Left colon (tissue), 2 donors: ENCODE measurements at regions of chr1 and their contacts with region 1.

Region 1: DNA sequence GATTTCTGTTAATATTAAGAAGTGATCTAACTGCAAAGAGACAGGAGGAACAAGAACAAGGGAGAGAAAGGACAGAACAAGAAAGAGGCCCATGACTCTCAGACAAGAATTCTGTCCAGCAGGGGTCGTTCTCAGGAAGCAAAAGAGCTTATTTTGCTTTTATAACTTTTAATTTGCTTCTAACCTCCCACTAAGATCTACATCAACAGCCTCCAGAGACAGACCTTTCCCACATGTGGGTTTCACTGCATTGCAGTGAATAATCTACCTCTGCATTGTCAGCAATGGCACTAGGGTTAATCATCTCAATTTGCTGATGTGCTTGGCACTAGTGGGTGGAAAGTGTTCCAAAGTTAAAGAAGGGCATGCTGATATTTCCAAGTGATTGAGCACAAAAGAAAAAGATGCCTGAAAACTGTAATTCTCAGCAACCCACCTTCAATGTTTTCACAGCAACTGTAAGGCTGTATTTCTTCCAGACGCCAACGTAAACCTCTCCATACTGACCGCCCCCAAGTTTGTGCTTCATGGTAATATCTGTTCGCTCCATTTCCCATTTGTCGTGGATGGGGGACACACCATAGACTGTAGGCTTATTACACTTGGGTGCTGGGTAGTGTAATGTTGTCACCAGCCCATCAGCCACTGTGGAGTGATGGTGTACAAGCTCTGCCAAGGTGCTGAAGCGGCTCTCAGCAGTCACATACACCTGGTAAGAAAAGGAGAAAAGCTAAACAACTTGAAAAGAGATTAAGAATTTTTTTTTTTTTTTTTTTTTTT is 39.5 kb downstream of the TOR3A start:
- DNase-seq: peak in 1 of 2 donors; percentile 54
- ATAC-seq: peak; percentile 72

Region 2: GRCh38 chr1:178931858-178932551 is 189.3 kb before region 1 on chr1:
- intact Hi-C with region 1: no loop called
- DNase-seq: peak; percentile 31 to 76
- ATAC-seq: peak; percentile 31

Region 3: DNA sequence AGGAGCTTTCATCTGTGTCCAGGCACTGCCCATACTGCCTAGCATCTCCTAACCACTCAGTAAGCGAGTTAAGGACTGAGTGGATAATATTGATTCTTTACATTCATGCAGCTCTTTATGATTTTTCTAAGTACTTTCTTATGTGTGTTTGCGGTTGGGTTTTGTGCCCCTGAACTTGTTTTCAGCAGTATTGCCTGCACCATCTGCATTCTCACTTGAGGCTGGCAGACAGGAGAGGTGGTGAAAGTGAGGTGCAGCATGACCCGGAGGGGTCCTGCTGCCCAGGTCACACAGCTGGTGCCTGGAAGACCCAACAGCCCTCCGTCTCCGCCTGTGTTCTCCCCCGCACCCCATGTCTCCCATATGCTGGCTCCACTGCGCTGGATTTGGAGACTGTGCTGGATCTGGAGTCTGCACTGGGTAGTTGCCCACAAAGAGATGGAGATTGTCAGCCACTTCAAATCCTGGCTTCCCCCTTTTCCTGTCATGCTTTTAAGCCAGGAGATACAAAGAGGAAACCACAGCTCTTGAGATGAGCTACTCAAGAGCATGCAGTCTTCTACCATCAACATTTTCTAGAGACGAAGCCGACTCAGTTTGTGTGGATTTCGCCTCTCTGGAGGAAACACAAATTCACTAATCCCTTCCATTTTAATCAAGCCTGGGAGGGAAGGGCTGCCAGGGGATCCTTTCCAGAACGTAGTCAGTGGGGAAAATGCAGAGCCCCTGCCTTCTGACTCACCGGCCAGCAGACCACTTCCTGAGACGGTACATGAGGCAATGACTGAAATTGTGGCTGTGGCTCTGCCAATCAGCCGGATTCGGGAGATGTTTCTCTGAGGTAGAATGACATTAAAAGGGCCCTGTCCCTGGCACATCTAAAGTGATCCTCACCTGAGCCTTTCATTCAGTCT is 178.8 kb before region 1 on chr1:
- intact Hi-C with region 1: no loop called
- DNase-seq: no peak
- ATAC-seq: no peak

Region 4: DNA sequence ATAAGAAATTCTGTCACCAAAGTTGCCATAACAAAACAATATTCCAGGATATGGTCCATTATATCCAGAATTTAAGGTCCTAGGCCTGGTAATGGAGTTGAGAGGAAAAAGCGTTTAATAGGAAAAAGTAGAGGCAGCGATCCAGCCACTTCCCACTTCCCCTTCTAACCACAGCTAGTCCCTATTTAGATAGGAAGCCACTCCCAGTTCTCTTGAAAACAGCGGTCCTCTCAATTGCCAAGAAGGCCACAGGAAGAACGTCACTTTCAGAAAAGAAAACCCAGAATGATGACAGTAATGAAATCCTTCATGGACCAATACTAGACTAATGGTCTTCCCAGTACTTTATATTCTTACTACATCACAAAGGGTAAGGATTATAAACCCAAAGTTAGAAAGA is 69.5 kb after region 1 on chr1:
- intact Hi-C with region 1: loop called in 1 of 2 experiments (anchors 10 kb)
- DNase-seq: no peak
- ATAC-seq: no peak

Region 5: DNA sequence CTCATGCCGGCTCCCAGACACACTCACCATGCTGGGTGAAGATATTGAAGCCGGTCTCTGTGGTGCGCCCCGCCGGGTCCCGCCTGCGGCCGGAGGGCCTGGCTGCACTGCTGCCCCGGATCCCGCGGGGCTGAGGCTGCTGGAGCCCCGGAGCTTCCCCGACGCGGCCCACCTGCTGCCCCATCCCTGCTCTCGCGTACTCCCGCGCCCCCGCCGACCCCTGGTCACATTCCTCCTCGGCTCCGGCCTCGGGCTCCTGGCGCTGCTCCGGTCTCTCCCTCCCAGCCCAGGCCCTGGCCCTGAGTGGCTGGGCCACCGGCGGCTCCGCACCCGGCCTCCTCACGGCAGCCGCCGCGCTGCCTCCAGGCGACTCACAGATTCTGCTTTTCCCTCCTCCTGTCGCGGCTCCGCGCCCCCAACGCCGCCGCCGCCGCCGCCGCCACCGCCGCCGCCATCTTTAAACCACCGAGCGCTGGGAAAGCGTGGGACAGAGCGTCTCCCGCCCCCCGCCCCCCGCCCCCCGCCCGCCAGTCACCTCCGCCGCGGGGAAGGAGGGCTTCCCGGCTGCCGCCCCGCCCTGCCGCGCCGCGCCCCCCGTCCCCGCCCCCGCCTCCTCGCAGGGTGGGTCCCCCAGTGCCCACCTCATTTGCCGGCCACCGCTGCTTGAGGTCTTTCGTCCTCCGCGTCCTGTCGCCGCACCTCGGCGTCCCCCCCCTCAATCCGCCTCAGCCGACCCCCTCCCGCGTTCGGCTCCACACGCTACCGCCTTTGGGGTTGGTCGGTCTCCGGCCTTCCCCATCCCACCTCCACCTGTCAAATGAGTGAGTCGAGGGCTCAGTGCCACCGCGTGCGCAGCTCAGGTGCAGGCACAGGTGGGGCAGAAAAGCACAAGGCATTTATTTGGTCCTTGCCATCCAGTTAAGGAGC is 108.1 kb after region 1 on chr1 and contains the start of gene ABL2:
- intact Hi-C with region 1: loop called in 1 of 2 experiments (anchors 10 kb)
- DNase-seq: peak; percentile 33 to 62
- ATAC-seq: peak; percentile 54
- total RNA-seq, gene ABL2: 9.6 to 11.1 TPM